A549 (cell line): ENCODE measurements at regions of chr22 and their contacts with region 1.

Region 1: DNA sequence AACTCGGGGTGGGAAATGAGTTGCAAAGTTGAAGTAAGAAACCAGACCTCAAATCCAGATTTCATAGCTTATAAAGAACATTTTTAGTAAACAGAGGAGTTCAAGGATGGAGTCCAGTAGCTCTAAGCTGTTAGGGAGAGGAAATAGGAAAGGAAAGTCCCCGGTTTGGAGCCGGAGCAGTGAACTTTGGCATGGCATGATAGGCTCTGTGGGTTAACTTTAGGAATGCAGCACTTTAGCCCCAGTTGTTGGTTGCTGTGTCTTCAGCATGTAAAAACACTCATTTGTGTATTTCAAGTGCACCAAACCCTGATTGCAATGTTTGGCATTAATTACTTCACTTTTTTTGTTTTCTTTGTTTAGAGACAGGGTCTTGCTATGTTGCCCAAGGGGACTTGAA is 8.6 kb upstream of the PIK3IP1 start:
- DNase-seq: no peak
- ATAC-seq: no peak
- H3K4me3 ChIP-seq: no peak overlapping the region
- H3K27ac ChIP-seq: no peak overlapping the region
- H3K4me1 ChIP-seq: peaks cover 5% of the 10 kb centered on the region; the same call in 2 of the 3 replicates
- CTCF ChIP-seq: no peak
- EP300 ChIP-seq: no peak
- POLR2A ChIP-seq: no peak
- RAD21 ChIP-seq: no peak

Region 2: GRCh38 chr22:31084811-31085497 is 215.9 kb before region 1 on chr22:
- CTCF ChIA-PET with region 1: no interaction called
- POLR2A ChIA-PET with region 1: no interaction called
- DNase-seq: peak in 1 of 2 experiments; percentile 39
- ATAC-seq: peak; percentile 40 to 53; a peak in 5 of 6 replicates
- H3K4me3 ChIP-seq: peak overlapping the region; percentile 58
- H3K27ac ChIP-seq: peak overlapping the region; percentile 85 to 94
- H3K4me1 ChIP-seq: peaks cover 31% of the 10 kb centered on the region
- CTCF ChIP-seq: peak; percentile 55
- EP300 ChIP-seq: no peak
- POLR2A ChIP-seq: no peak
- RAD21 ChIP-seq: peak; percentile 60 to 77

Region 3: GRCh38 chr22:31279821-31280505 is 20.9 kb before region 1 on chr22:
- CTCF ChIA-PET with region 1: no interaction called
- POLR2A ChIA-PET with region 1: no interaction called
- DNase-seq: no peak
- ATAC-seq: no peak
- H3K4me3 ChIP-seq: no peak overlapping the region
- H3K27ac ChIP-seq: no peak overlapping the region
- H3K4me1 ChIP-seq: no peaks in the 10 kb centered on the region
- CTCF ChIP-seq: no peak
- EP300 ChIP-seq: no peak
- POLR2A ChIP-seq: no peak
- RAD21 ChIP-seq: no peak

Region 4: GRCh38 chr22:31290494-31291471 is 10.1 kb before region 1 on chr22:
- CTCF ChIA-PET with region 1: interaction called, 11 read pairs
- POLR2A ChIA-PET with region 1: interaction called, 7 read pairs
- DNase-seq: peak; percentile 78 to 89
- ATAC-seq: peak; percentile 95 to 97
- H3K4me3 ChIP-seq: peak overlapping the region; percentile 50
- H3K27ac ChIP-seq: peak overlapping the region; percentile 59 to 84; a peak in 5 of 6 replicates
- H3K4me1 ChIP-seq: peaks cover 20% of the 10 kb centered on the region
- CTCF ChIP-seq: no peak
- EP300 ChIP-seq: no peak
- POLR2A ChIP-seq: no peak
- RAD21 ChIP-seq: no peak